Right lobe of liver (tissue), 6 donors: ENCODE measurements at regions of chr19 and their contacts with region 1.

Region 1: GRCh38 chr19:43747557-43748204 is 7.1 kb downstream of the SMG9 start:
- DNase-seq: no peak
- ATAC-seq: no peak
- H3K4me3 ChIP-seq: no peak overlapping the region
- H3K27ac ChIP-seq: no peak overlapping the region
- H3K4me1 ChIP-seq: no peaks in the 10 kb centered on the region
- H3K27me3 ChIP-seq: no peaks in the 10 kb centered on the region
- CTCF ChIP-seq: no peak
- POLR2A ChIP-seq: no peak

Region 2: GRCh38 chr19:43316592-43317319 is 430.9 kb before region 1 on chr19:
- intact Hi-C with region 1: no loop called
- DNase-seq: no peak
- ATAC-seq: no peak
- H3K4me3 ChIP-seq: no peak overlapping the region
- H3K27ac ChIP-seq: no peak overlapping the region
- H3K4me1 ChIP-seq: no peaks in the 10 kb centered on the region
- H3K27me3 ChIP-seq: no peaks in the 10 kb centered on the region
- CTCF ChIP-seq: peak in 1 of 4 donors; percentile 23
- POLR2A ChIP-seq: no peak

Region 3: DNA sequence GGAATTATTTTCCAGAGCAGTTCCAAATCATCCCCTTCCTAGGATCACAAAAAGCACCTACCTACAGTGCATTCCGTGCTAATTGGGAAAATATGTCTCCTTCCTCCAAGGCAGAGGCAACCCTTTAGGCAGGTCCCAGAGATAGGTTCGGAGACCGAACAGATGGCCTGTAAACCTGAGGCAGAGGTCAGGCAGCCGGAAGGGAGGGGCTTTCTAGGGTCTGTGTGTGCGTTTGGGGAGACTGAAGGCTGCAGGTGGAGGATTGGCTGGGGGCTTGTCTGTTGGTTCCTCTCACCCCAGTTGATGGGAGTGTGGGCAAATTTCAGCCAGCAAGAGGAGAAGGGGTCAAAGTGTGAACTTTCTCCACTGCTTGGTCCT is 26.0 kb after region 1 on chr19:
- intact Hi-C with region 1: loop called in 1 of 2 experiments (anchors 2 kb)
- DNase-seq: no peak
- ATAC-seq: no peak
- H3K4me3 ChIP-seq: no peak overlapping the region
- H3K27ac ChIP-seq: no peak overlapping the region
- H3K4me1 ChIP-seq: peaks cover 0 to 9% (median 0%) of the 10 kb centered on the region in 4 donors
- H3K27me3 ChIP-seq: no peaks in the 10 kb centered on the region
- CTCF ChIP-seq: no peak
- POLR2A ChIP-seq: no peak

Region 4: DNA sequence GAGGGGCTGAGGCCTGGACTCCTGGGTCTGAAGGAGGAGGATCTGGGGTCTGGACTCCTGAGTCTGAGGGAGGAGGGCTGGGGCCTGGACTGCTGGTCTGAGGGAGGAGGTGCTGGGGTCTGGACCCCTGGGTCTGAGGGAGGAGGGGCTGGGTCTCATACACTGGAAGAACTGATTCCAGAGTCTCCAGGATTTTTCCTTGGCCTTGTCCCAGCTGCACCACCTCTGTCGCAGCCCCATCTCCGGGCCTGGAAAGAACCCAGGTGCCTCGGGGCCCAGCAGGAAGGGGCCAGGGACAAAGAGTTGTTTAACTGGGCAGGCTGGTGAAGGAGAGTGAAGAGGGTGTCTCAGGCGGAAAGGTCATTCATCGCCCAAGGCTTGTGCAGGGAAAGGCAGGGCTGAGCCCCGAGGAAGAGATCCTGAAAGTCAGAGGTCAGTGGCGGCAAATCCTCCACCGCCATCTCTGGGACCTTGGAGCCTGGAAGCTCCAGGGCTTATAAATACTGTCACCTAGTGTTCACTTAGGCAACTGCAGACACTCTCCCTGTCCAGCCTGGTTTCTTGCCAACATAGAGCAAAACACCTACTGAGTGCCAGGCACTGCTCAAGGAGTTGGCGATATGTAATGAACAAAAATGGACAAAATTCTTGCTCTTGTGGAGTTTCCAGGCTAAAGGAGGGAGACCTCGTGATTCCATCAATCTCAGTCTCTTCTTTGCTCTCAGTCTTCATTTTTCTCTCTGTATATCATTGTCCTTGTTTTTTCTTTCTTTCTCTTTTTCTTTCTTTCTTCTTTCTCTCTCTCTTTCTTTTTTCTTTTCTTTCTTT is 37.5 kb after region 1 on chr19:
- intact Hi-C with region 1: loop called in 1 of 2 experiments (anchors 5 kb)
- DNase-seq: peak in 2 of 3 donors; percentile 49 to 58
- ATAC-seq: peak; percentile 81 to 93 (median 90)
- H3K4me3 ChIP-seq: no peak overlapping the region
- H3K27ac ChIP-seq: no peak overlapping the region
- H3K4me1 ChIP-seq: no peaks in the 10 kb centered on the region
- H3K27me3 ChIP-seq: no peaks in the 10 kb centered on the region
- CTCF ChIP-seq: peak; percentile 86 to 97 (median 90)
- POLR2A ChIP-seq: no peak